ENCODE measurements at regions of chr1 and their contacts with region 1.

Region 1: GRCh38 chr1:223831755-223832636 is 13.8 kb downstream of the TP53BP2 start:
- DNase-seq: no peak
- H3K4me3 Mint-ChIP-seq: peak overlapping the region; percentile 23
- H3K27ac Mint-ChIP-seq: peak overlapping the region; percentile 90
- H3K4me1 Mint-ChIP-seq: peaks cover 10% of the 10 kb centered on the region
- H3K27me3 Mint-ChIP-seq: no peaks in the 10 kb centered on the region

Region 2: GRCh38 chr1:222897527-222898190 is 934.3 kb before region 1 on chr1:
- intact Hi-C with region 1: loop called (anchors 5 kb)
- DNase-seq: no peak
- H3K4me3 Mint-ChIP-seq: no peak overlapping the region
- H3K27ac Mint-ChIP-seq: peak overlapping the region; percentile 51
- H3K4me1 Mint-ChIP-seq: peaks cover 16% of the 10 kb centered on the region
- H3K27me3 Mint-ChIP-seq: peaks cover 4% of the 10 kb centered on the region

Region 3: DNA sequence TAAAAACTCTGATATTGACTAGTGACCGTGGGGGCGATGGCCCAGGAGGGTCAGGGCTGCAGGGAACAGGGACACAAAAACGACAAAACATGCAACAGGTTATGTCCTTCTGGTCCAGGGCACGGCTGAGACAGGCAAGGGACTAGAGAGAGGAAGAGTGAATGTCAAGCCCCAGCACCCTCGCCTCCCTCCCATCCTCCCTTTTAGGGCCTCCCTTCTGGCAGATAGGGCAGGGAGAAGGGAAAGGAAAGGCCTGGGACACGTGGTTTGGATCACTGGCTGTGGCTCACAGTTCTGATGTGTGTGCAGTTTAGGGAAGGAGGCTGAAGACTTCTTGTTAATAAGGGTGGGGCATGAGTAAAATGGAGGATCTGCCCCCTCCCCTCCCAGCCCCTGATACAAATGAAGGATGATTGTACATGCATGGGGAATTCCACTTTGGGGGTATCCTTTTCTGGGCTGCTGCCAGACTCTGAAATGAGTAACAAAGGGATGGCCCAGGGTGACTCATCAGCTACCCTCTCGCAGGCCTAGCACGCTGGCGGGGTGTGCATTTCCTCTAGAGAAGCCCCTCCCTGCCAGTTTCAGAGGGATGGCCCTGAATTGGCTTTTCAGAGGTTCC is 105.5 kb before region 1 on chr1:
- intact Hi-C with region 1: loop called (anchors 1 kb)
- DNase-seq: peak; percentile 86
- H3K4me3 Mint-ChIP-seq: peak overlapping the region; percentile 77
- H3K27ac Mint-ChIP-seq: peak overlapping the region; percentile 95
- H3K4me1 Mint-ChIP-seq: peaks cover 85% of the 10 kb centered on the region
- H3K27me3 Mint-ChIP-seq: no peaks in the 10 kb centered on the region

Region 4: DNA sequence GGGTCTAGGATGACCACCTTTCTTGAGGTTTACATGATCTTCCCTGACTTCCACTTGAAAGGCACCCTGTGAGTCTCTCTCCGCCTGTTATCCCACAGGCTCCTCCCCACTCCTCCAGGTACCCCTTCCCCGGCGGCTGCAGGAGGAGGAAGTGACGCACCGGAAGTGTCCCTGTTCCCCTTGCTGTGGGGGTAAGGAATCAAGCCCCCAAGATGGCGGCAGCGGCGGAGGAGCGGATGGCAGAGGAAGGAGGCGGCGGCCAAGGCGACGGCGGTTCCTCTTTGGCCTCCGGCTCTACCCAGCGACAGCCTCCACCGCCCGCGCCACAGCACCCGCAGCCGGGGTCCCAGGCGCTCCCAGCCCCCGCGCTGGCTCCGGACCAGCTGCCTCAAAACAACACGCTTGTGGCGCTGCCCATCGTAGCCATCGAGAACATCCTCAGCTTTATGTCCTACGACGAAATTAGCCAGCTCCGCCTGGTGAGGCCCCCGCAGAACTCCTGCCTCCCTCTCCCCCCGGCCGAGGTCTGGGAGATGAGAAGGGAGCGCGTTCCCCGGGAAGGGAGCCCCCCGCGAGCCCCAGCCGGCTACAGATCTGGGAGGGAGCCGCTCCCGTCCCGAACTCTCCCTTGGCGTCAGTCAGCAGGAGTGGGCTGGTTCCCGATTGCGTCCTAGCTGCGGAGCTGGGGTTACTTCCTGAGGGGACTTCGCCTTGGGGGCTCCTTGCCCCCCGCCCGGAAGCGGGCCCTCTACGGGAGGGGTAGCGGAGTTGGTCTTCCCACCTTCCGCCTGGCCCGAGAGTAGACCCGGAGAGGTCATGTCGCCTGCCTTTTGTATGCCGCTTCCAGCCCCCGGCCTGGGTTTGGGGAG is 282.2 kb after region 1 on chr1 and contains the start of gene FBXO28:
- intact Hi-C with region 1: loop called (anchors 5 kb)
- DNase-seq: peak; percentile 90
- H3K4me3 Mint-ChIP-seq: peak within 1 kb of the TSS; percentile 91
- H3K27ac Mint-ChIP-seq: peak within 1 kb of the TSS; percentile 89
- H3K4me1 Mint-ChIP-seq: peaks cover 27% of the 10 kb centered on the region
- H3K27me3 Mint-ChIP-seq: peaks cover 19% of the 10 kb centered on the region
- total RNA-seq, gene FBXO28: 29.3 and 32.2 TPM in 2 replicates

Region 5: GRCh38 chr1:224182866-224183590 is 351.0 kb after region 1 on chr1 and contains the start of gene DEGS1:
- intact Hi-C with region 1: loop called (anchors 2 kb)
- DNase-seq: peak; percentile 80
- H3K4me3 Mint-ChIP-seq: peak within 1 kb of the TSS; percentile 96
- H3K27ac Mint-ChIP-seq: peak within 1 kb of the TSS; percentile 93
- H3K4me1 Mint-ChIP-seq: peaks cover 46% of the 10 kb centered on the region
- H3K27me3 Mint-ChIP-seq: peaks cover 3% of the 10 kb centered on the region
- total RNA-seq, gene DEGS1: 54.7 and 57.1 TPM in 2 replicates

Region 6: GRCh38 chr1:224497714-224498573 is 665.9 kb after region 1 on chr1:
- intact Hi-C with region 1: loop called (anchors 5 kb)
- DNase-seq: peak; percentile 62
- H3K4me3 Mint-ChIP-seq: peak overlapping the region; percentile 59
- H3K27ac Mint-ChIP-seq: peak overlapping the region; percentile 97
- H3K4me1 Mint-ChIP-seq: peaks cover 63% of the 10 kb centered on the region
- H3K27me3 Mint-ChIP-seq: peaks cover 3% of the 10 kb centered on the region